Breast epithelium (tissue), 4 donors: ENCODE measurements at regions of chr12 and their contacts with region 1.

Region 1: GRCh38 chr12:41234692-41235091 is 46.6 kb downstream of the PDZRN4 start:
- DNase-seq: no peak
- H3K4me3 ChIP-seq: no peak overlapping the region
- H3K27ac ChIP-seq: no peak overlapping the region
- H3K4me1 ChIP-seq: no peaks in the 10 kb centered on the region
- H3K27me3 ChIP-seq: no peaks in the 10 kb centered on the region
- CTCF ChIP-seq: no peak
- POLR2A ChIP-seq: no peak

Region 2: GRCh38 chr12:40597133-40597532 is 637.6 kb before region 1 on chr12:
- intact Hi-C with region 1: loop called (anchors 5 kb)
- DNase-seq: no peak
- H3K4me3 ChIP-seq: no peak overlapping the region
- H3K27ac ChIP-seq: no peak overlapping the region
- H3K4me1 ChIP-seq: no peaks in the 10 kb centered on the region
- H3K27me3 ChIP-seq: no peaks in the 10 kb centered on the region
- CTCF ChIP-seq: no peak
- POLR2A ChIP-seq: no peak

Region 3: GRCh38 chr12:41932470-41932991 is 697.8 kb after region 1 on chr12:
- intact Hi-C with region 1: no loop called
- DNase-seq: peak; percentile 39 to 58
- H3K4me3 ChIP-seq: peak overlapping the region; percentile 47 to 68 (median 59)
- H3K27ac ChIP-seq: peak overlapping the region; percentile 40 to 51
- H3K4me1 ChIP-seq: no peaks in the 10 kb centered on the region
- H3K27me3 ChIP-seq: no peaks in the 10 kb centered on the region
- CTCF ChIP-seq: no peak
- POLR2A ChIP-seq: no peak